Calu3 (cell line): ENCODE measurements at regions of chr2 and their contacts with region 1.

Region 1: GRCh38 chr2:223587301-223587700 is 14.9 kb downstream of the SCG2 start:
- DNase-seq: no peak
- H3K4me3 Mint-ChIP-seq: no peak overlapping the region
- H3K27ac Mint-ChIP-seq: no peak overlapping the region
- H3K4me1 Mint-ChIP-seq: no peaks in the 10 kb centered on the region
- H3K27me3 Mint-ChIP-seq: no peaks in the 10 kb centered on the region
- CTCF ChIP-seq: no peak

Region 2: DNA sequence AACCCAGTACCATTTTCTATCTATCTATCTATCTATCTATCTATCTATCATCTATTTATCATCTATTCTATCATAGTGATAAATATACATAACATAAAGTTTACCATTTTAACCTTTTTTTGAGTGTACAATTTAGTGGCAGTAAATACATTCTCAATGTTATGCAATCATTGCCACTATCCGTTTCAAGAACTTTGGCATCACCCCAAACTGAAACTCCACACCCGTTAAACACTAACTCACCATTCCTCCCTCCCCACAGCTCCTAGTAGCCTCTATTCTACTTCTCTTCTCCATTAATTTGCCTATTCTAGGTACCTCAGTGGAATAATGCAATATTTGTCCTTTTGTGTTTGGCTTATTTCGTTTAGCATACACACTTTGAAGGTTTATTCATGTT is 617.8 kb before region 1 on chr2:
- CTCF ChIA-PET with region 1: interaction called, 11 read pairs
- intact Hi-C with region 1: no loop called
- DNase-seq: no peak
- H3K4me3 Mint-ChIP-seq: no peak overlapping the region
- H3K27ac Mint-ChIP-seq: no peak overlapping the region
- H3K4me1 Mint-ChIP-seq: peaks cover 8% of the 10 kb centered on the region
- H3K27me3 Mint-ChIP-seq: no peaks in the 10 kb centered on the region
- CTCF ChIP-seq: no peak